Natural killer cell (primary cell): ENCODE measurements at regions of chr16 and their contacts with region 1.

Region 1: DNA sequence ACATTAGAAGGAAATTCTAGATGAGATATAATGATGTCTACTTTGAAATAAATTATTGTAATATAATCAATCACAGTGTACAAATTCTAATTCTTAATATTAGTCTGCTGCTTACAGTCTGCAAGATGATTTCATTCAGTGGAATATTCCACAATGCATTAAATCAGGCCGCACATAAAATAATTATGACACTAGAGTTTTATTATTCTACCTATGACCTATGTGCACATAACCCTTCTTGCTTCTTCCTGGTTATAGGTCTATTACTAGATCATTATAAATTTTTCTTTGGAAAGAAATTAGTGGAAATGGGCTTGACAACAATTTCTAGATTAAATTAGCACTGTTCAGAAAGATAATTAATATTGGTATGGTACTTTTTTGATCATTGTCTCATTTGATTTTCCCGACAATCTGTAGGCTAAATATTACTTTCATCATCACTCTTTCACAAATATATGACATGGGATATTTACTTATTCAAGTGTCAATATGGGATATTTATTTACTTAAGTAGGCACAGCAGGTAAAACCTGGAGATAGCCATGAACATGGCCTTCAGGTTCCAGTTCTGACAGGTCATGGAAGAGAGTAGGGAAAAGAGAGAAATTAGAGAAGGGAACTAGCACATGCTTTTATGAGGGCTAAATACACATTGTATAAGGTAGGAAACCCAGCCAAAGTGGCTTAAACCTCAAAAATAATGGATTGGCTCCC is 476.4 kb downstream of the TOX3 start:
- DNase-seq: no peak
- ATAC-seq: no peak
- H3K4me3 ChIP-seq: no peak overlapping the region
- H3K4me3 Mint-ChIP-seq: no peak overlapping the region
- H3K27ac ChIP-seq: no peak overlapping the region
- H3K27ac Mint-ChIP-seq: no peak overlapping the region
- H3K4me1 ChIP-seq: no peaks in the 10 kb centered on the region
- H3K4me1 Mint-ChIP-seq: no peaks in the 10 kb centered on the region
- H3K27me3 ChIP-seq: no peaks in the 10 kb centered on the region
- H3K27me3 Mint-ChIP-seq: no peaks in the 10 kb centered on the region
- CTCF ChIP-seq: no peak

Region 2: GRCh38 chr16:52050418-52050817 is 20.1 kb before region 1 on chr16:
- intact Hi-C with region 1: loop called (anchors 1 kb)
- DNase-seq: no peak
- ATAC-seq: no peak
- H3K4me3 ChIP-seq: no peak overlapping the region
- H3K4me3 Mint-ChIP-seq: no peak overlapping the region
- H3K27ac ChIP-seq: no peak overlapping the region
- H3K27ac Mint-ChIP-seq: no peak overlapping the region
- H3K4me1 ChIP-seq: no peaks in the 10 kb centered on the region
- H3K4me1 Mint-ChIP-seq: no peaks in the 10 kb centered on the region
- H3K27me3 ChIP-seq: no peaks in the 10 kb centered on the region
- H3K27me3 Mint-ChIP-seq: no peaks in the 10 kb centered on the region
- CTCF ChIP-seq: no peak